ENCODE measurements at regions of chr1 and their contacts with region 1.

Region 1: DNA sequence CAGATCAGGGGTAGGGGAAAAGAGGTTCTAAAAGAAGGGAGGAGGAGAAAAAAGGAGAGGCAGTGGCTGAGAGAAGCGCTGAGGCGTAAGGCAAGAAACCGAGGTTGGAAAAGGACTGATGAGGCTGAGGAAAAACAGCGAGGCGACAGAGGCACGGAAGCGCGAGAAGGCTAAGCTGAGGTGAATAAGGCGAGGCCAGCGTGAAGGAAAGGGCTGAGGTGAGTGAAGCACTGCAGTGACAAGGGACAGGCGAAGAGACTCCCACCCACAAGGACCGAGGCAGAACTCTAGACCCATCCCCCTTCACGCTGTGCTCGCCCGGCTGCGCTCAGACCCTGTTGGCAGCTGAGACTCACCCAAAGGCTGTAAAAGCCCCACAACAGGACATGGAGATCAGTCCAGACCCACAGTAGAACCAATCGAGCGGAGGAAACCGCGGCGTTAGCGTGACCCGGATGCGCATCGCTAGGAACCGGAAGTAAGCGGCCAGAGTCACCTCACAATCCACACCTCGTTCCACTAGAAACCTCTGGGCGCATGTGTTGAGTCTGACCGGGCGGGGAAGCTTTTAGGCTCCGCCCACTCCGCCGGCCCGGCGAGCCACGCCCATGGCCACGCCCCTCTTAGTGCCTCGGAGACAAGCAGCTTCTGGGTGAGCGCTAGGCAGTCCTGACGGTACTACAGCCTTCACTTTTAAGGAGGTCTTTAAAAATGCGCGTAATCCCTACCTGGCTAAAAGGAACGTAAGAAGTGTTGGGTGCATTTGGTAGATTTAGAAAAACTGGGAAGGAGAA is at the start of gene EYA3:
- DNase-seq: peak; percentile 100
- ATAC-seq: peak; percentile 95
- H3K4me3 Mint-ChIP-seq: peak within 1 kb of the TSS; percentile 94
- H3K27ac Mint-ChIP-seq: peak within 1 kb of the TSS; percentile 95
- H3K4me1 Mint-ChIP-seq: peaks cover 30% of the 10 kb centered on the region
- H3K27me3 Mint-ChIP-seq: peaks cover 4% of the 10 kb centered on the region
- CTCF ChIP-seq: no peak
- total RNA-seq, gene EYA3: 34.6 to 34.9 TPM

Region 2: GRCh38 chr1:27952147-27952546 is 136.2 kb before region 1 on chr1:
- CTCF ChIA-PET with region 1: no interaction called
- POLR2A ChIA-PET with region 1: no interaction called
- intact Hi-C with region 1: no loop called
- DNase-seq: no peak
- ATAC-seq: no peak
- H3K4me3 Mint-ChIP-seq: no peak overlapping the region
- H3K27ac Mint-ChIP-seq: no peak overlapping the region
- H3K4me1 Mint-ChIP-seq: no peaks in the 10 kb centered on the region
- H3K27me3 Mint-ChIP-seq: no peaks in the 10 kb centered on the region
- CTCF ChIP-seq: no peak

Region 3: GRCh38 chr1:28056129-28056925 is 32.0 kb before region 1 on chr1:
- CTCF ChIA-PET with region 1: interaction called, 7 read pairs
- POLR2A ChIA-PET with region 1: interaction called, 12 read pairs
- intact Hi-C with region 1: no loop called
- DNase-seq: peak; percentile 92
- ATAC-seq: peak; percentile 92
- H3K4me3 Mint-ChIP-seq: peak overlapping the region; percentile 11
- H3K27ac Mint-ChIP-seq: peak overlapping the region; percentile 90
- H3K4me1 Mint-ChIP-seq: peaks cover 46% of the 10 kb centered on the region
- H3K27me3 Mint-ChIP-seq: no peaks in the 10 kb centered on the region
- CTCF ChIP-seq: no peak

Region 4: GRCh38 chr1:28099050-28099769 is 10.8 kb after region 1 on chr1:
- CTCF ChIA-PET with region 1: interaction called, 16 read pairs
- POLR2A ChIA-PET with region 1: interaction called, 3 read pairs
- intact Hi-C with region 1: no loop called
- DNase-seq: no peak
- ATAC-seq: no peak
- H3K4me3 Mint-ChIP-seq: no peak overlapping the region
- H3K27ac Mint-ChIP-seq: no peak overlapping the region
- H3K4me1 Mint-ChIP-seq: no peaks in the 10 kb centered on the region
- H3K27me3 Mint-ChIP-seq: peaks cover 5% of the 10 kb centered on the region
- CTCF ChIP-seq: no peak

Region 5: GRCh38 chr1:28104866-28105467 is 16.6 kb after region 1 on chr1:
- CTCF ChIA-PET with region 1: interaction called, 16 read pairs
- POLR2A ChIA-PET with region 1: no interaction called
- intact Hi-C with region 1: no loop called
- DNase-seq: no peak
- ATAC-seq: no peak
- H3K4me3 Mint-ChIP-seq: no peak overlapping the region
- H3K27ac Mint-ChIP-seq: no peak overlapping the region
- H3K4me1 Mint-ChIP-seq: no peaks in the 10 kb centered on the region
- H3K27me3 Mint-ChIP-seq: peaks cover 1% of the 10 kb centered on the region
- CTCF ChIP-seq: no peak

Region 6: DNA sequence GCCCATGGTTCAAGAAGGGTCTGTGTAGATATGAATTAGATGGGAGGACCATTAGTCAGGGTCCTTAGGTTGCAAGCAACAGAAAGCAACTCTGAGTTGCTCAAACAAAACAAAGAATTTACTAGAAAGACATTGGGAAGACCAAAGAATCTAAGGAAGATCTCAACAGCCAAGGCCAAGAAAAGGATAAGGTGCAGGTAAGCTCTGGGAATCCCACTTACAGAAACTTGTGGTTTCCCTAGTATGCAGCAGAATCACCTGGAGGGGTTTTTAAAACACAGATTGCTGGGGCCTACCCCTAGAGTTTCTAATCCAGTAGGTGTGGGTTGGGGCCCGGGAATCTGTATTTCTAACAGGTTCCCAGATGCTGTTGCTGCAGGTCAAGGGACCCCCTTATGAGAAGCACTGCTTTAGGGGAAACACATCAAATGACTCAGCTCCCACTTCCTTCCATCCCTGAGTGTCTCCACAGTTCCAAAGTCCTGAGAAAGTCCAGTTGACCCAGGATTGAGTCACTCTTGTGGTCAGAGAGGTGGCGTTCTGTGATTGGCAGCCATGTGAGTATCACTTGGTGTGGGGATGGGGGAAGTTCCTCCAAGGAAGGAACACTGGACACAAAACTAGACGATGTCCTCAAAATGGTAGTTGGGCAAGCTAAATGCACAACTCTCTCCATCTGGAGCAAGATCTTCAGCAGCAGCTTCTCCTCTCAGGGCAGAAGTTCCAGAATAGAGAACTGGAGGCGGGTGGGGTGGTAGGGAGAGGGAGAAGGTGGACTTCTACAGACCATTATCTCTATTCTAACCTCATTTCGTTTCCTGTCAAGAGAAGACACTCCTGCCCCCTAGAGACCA is 24.2 kb after region 1 on chr1:
- CTCF ChIA-PET with region 1: interaction called, 12 read pairs
- POLR2A ChIA-PET with region 1: interaction called, 3 read pairs
- intact Hi-C with region 1: no loop called
- DNase-seq: peak; percentile 25
- ATAC-seq: no peak
- H3K4me3 Mint-ChIP-seq: no peak overlapping the region
- H3K27ac Mint-ChIP-seq: no peak overlapping the region
- H3K4me1 Mint-ChIP-seq: peaks cover 25% of the 10 kb centered on the region
- H3K27me3 Mint-ChIP-seq: peaks cover 6% of the 10 kb centered on the region
- CTCF ChIP-seq: peak; percentile 29

Region 7: DNA sequence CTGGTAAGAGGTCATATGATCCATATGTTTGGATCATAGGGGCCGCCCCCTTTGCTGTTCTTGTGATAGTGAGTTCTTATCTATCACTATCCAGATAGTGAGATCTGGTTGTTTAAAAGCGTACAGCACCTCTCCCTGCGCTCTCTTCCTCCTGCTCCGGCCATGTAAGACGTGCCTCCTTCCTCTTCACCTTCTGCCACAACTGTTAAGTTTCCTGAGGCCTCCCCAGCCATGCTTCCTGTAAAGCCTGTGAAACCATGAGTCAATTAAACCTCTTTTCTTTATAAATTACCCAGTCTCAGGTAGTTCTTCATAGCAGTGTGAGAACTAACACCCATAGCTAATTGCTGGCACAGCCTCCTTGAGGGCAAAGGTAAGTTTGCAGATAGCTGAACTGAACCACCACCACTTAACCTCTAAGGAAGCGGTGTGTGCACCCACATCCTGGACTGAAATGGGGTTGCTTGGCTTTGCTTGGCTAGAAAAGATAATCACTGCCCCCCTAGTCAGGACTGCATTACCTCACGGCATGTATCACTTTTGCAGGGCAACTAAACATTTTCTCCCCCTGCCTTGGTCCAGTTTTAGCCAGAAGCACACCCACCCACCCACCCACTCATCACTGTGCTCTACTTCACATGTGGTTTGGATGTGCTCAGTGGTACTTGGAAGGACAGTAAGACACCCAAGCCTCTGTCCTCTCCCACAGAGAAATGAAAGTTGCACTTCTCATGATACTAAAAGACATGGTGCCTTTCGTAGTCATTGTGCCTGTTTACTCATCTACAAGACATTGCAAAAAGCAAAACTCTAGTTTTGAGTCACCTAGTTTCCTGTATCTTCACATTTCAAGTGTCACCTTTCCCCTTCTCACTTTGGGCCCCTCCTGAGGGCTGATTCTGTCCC is 111.2 kb after region 1 on chr1:
- CTCF ChIA-PET with region 1: interaction called, 17 read pairs
- POLR2A ChIA-PET with region 1: interaction called, 11 read pairs
- intact Hi-C with region 1: no loop called
- DNase-seq: peak; percentile 92
- ATAC-seq: peak; percentile 88
- H3K4me3 Mint-ChIP-seq: peak overlapping the region; percentile 38
- H3K27ac Mint-ChIP-seq: peak overlapping the region; percentile 97
- H3K4me1 Mint-ChIP-seq: peaks cover 43% of the 10 kb centered on the region
- H3K27me3 Mint-ChIP-seq: no peaks in the 10 kb centered on the region
- CTCF ChIP-seq: no peak

Region 8: DNA sequence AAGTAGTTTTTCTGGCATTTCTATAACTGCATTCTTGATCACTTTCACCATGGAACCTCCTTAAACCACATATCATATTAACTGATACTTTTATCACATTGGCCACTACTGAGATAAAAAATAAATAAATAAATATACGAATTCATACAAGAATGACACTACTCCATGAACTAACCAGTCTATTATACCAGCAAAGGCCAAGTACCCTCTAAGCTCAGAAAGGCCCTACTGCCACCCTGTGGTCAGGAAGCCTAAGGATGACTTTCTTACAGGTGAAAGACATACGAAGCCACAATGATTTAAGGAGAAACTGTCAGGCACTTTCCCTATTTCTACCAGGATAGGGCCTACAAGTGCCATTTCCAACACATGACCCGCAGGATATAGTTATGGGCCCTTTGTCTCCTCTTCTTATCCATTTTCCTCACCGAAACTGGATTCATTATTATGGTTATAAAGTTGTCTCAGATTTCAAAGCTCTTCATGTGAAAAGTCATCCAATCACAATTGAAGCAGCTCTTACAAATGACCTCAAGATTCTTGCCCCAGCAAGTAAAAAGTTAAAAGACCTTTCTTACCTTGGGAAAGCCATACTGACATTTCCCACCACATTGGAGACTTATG is 120.6 kb after region 1 on chr1:
- CTCF ChIA-PET with region 1: interaction called, 149 read pairs
- POLR2A ChIA-PET with region 1: interaction called, 12 read pairs
- intact Hi-C with region 1: loop called (anchors 2 kb)
- DNase-seq: peak; percentile 82
- ATAC-seq: peak; percentile 88
- H3K4me3 Mint-ChIP-seq: no peak overlapping the region
- H3K27ac Mint-ChIP-seq: no peak overlapping the region
- H3K4me1 Mint-ChIP-seq: peaks cover 3% of the 10 kb centered on the region
- H3K27me3 Mint-ChIP-seq: no peaks in the 10 kb centered on the region
- CTCF ChIP-seq: peak; percentile 81

Measured in activated CD8-positive, alpha-beta T cell treated with anti-CD3 and anti-CD28 coated beads for 36 hours (primary cell).